HAP-1 (cell line): ENCODE measurements at regions of chr9 and their contacts with region 1.

Region 1: DNA sequence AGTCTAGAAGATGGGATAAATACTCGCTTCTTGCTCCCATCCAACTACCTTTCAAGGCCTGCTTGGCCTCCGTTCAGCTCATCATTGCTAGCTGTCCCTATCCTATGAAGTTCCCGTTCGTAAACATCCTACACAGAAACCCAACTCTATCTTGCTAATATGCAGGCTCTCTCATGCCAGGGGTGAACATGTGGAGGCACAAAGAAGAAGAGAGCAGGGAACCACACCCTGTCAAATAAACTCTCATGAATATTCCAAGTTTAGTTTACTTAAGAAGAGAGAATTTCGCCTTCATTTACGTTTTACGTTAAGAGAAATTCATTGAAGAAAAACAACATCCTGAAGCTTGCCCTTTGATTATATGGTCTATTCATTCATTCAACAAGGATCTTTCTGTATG is 7.9 kb upstream of the HSD17B3 start:
- DNase-seq: no peak
- H3K4me3 ChIP-seq: no peak overlapping the region
- H3K4me1 ChIP-seq: no peaks in the 10 kb centered on the region
- H3K27me3 ChIP-seq: no peaks in the 10 kb centered on the region

Region 2: DNA sequence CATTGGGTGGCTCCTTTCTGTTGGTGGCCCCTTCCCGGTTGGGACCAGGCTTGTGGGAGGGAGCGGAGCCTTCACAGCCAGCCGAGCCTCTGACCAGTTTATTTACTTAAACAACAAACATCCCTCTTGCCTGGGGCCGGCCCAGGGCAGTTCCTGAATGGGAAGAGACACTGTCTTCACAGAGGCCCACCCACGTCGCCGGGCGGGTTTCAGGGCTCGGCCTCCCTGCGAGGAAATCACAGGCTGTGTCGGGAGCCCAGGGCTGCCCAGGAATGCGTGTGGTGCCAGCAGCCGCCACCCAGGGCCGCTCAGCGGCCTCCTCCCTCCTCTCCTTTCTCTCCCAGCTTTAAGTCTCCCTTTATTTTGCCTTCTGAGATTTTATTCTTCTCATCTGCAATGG is 140.4 kb before region 1 on chr9:
- in situ Hi-C with region 1: no loop called
- DNase-seq: peak in 1 of 2 experiments; percentile 48
- H3K4me3 ChIP-seq: no peak overlapping the region
- H3K4me1 ChIP-seq: no peaks in the 10 kb centered on the region; the same call in 1 of the 2 replicates
- H3K27me3 ChIP-seq: no peaks in the 10 kb centered on the region

Region 3: GRCh38 chr9:96236854-96237550 is 72.8 kb before region 1 on chr9:
- in situ Hi-C with region 1: loop called (anchors 5 kb)
- DNase-seq: no peak
- H3K4me3 ChIP-seq: no peak overlapping the region
- H3K4me1 ChIP-seq: no peaks in the 10 kb centered on the region
- H3K27me3 ChIP-seq: no peaks in the 10 kb centered on the region